ENCODE measurements at regions of chr19 and their contacts with region 1.

Region 1: DNA sequence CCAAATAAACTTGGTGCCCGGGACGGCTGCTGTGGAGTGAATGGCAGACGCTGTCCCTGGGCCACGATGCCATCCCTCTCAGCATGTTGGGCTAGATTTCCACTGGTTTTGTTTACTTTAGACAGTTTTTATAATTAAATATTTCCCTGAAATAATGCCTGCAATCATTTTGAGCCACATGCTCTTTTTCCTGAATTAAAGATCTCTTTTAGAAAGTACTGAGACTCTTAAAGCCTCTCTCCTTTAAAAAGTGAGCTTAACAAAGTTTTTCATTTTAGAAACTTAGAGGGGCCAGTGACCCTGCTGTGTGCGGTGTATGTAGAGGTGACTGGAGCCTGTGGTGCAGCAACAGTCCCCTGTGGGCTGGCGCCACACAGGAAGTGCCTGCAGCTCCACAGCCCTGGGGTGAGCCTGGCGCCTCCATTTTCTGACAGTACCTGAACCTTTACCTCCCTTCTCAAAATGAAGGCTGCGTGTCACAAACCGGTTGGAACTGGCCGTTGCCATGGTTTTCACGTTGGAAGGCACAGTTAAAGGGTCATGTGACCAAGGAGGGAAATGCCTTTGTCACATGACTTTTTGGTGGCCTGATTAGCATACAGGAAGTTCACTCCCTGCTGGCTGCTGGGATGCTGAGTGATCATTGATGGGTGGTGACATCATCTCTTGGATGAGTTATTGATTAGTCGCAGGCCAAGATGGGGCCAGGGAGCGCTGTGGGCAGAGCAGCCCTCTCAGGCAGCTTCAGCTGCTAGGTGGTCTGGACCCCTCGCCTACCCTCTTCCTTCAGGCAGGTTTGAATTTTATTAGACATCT is 26.3 kb downstream of the TSSK6 start:
- DNase-seq: peak; percentile 88
- H3K4me3 ChIP-seq: no peak overlapping the region
- H3K27ac ChIP-seq: peak overlapping the region; percentile 58 to 70 (median 60)
- H3K4me1 ChIP-seq: peaks cover 0 to 41% (median 30%) of the 10 kb centered on the region in 4 donors
- H3K27me3 ChIP-seq: no peaks in the 10 kb centered on the region
- CTCF ChIP-seq: no peak
- EP300 ChIP-seq: no peak
- POLR2A ChIP-seq: no peak

Region 2: GRCh38 chr19:19224852-19225494 is 264.1 kb before region 1 on chr19:
- intact Hi-C with region 1: no loop called
- DNase-seq: no peak
- H3K4me3 ChIP-seq: peak overlapping the region in 3 of 4 donors; percentile 12 to 43 (median 39)
- H3K27ac ChIP-seq: no peak overlapping the region
- H3K4me1 ChIP-seq: peaks cover 0 to 9% (median 8%) of the 10 kb centered on the region in 4 donors
- H3K27me3 ChIP-seq: peaks cover 16 to 67% (median 43%) of the 10 kb centered on the region in 3 donors
- CTCF ChIP-seq: peak in 2 of 4 experiments; percentile 28 to 41
- EP300 ChIP-seq: no peak
- POLR2A ChIP-seq: no peak

Region 3: GRCh38 chr19:19366612-19367396 is 122.3 kb before region 1 on chr19:
- intact Hi-C with region 1: loop called (anchors 1 kb)
- DNase-seq: no peak
- H3K4me3 ChIP-seq: no peak overlapping the region
- H3K27ac ChIP-seq: peak overlapping the region in 3 of 4 donors; percentile 25 to 33 (median 27)
- H3K4me1 ChIP-seq: peaks cover 0 to 12% (median 5%) of the 10 kb centered on the region in 4 donors
- H3K27me3 ChIP-seq: no peaks in the 10 kb centered on the region
- CTCF ChIP-seq: peak; percentile 88 to 96 (median 93)
- EP300 ChIP-seq: no peak
- POLR2A ChIP-seq: no peak

Measured in sigmoid colon (tissue), 7 donors.